ENCODE measurements at regions of chr3 and their contacts with region 1.

Region 1: GRCh38 chr3:45224824-45225464 is 1.1 kb downstream of the TMEM158 start:
- DNase-seq: peak; percentile 89
- ATAC-seq: peak; percentile 71

Region 2: GRCh38 chr3:45154641-45155147 is 70.2 kb before region 1 on chr3:
- intact Hi-C with region 1: no loop called
- DNase-seq: no peak
- ATAC-seq: no peak

Region 3: DNA sequence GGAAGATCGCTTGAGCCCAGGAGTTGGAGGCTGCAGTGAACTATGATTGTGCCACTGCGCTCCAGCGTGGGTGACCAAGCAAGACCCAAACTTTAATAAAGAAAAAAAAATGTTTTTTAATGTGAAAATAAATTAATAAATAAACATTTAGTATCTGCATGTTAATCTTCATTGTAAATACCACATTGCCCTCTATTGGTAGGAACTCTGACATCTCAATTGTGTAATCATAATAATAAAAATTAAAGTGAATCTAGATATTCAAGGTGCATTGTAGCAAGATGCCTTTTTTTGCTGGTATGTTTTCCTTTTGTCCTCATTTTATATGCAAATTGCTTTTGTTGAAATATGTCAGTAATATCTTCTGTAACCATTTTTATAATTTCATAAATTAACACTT is 274.6 kb after region 1 on chr3:
- intact Hi-C with region 1: loop called (anchors 5 kb)
- DNase-seq: no peak
- ATAC-seq: no peak